Right cardiac atrium (tissue), 5 donors: ENCODE measurements at regions of chr11 and their contacts with region 1.

Region 1: GRCh38 chr11:33742249-33742851 is 6.1 kb upstream of the CD59 start:
- DNase-seq: no peak
- ATAC-seq: peak; percentile 42 to 43
- H3K4me3 ChIP-seq: no peak overlapping the region
- H3K27ac ChIP-seq: no peak overlapping the region
- H3K4me1 ChIP-seq: peaks cover 2% of the 10 kb centered on the region
- H3K27me3 ChIP-seq: no peaks in the 10 kb centered on the region

Region 2: GRCh38 chr11:33344611-33345010 is 397.7 kb before region 1 on chr11:
- intact Hi-C with region 1: loop called in 1 of 4 experiments (anchors 10 kb)
- DNase-seq: no peak
- ATAC-seq: peak in 1 of 2 donors; percentile 31
- H3K4me3 ChIP-seq: no peak overlapping the region
- H3K27ac ChIP-seq: no peak overlapping the region
- H3K4me1 ChIP-seq: no peaks in the 10 kb centered on the region
- H3K27me3 ChIP-seq: no peaks in the 10 kb centered on the region

Region 3: DNA sequence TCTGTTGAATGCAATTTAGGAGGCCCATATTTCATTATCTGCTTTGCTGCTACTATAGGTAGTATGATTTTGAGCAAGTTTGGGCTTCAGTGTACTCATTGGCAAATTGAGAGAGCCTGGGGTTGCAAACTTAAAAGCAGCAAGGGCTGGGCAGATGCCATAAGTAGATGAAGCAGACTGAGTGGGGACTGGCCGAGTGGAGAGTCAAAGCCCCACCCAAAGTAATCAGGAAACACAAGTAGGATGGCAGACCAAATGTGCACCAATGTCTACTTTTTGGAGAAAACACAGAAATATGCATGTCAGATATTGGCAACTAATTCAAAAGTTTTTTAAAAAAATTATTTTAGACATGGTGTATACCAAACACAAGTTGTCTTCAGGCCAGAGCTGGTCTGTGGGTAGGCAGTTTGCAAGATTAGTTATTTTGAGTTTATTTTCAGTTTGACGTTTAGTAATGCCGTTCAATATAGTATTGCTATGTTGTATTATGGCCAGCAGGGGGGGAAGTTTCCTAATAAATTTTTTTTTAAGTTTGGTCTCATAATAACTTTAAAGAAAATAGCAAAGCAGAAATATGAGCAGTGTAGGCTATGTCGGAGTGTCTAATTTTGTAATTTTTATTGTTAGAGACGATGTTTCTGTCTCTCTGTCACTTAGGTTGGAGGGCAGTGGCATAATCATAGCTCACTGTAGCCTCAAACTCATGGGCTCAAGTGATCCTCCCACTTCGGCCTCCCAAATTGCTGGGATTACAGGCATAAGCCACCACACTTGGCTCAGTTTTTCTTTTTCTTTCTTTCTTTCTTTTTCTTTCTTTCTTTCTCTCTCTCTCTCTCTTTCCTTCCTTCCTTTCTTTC is 380.1 kb before region 1 on chr11:
- intact Hi-C with region 1: loop called in 2 of 4 experiments (anchors 5 kb)
- DNase-seq: no peak
- ATAC-seq: peak; percentile 30 to 53
- H3K4me3 ChIP-seq: no peak overlapping the region
- H3K27ac ChIP-seq: no peak overlapping the region
- H3K4me1 ChIP-seq: peaks cover 3% of the 10 kb centered on the region
- H3K27me3 ChIP-seq: no peaks in the 10 kb centered on the region

Region 4: GRCh38 chr11:33542921-33543320 is 199.4 kb before region 1 on chr11:
- intact Hi-C with region 1: loop called in 2 of 4 experiments (anchors 10 kb)
- DNase-seq: peak; percentile 46 to 76 (median 67)
- ATAC-seq: peak; percentile 11 to 74
- H3K4me3 ChIP-seq: no peak overlapping the region
- H3K27ac ChIP-seq: no peak overlapping the region
- H3K4me1 ChIP-seq: no peaks in the 10 kb centered on the region
- H3K27me3 ChIP-seq: no peaks in the 10 kb centered on the region